Left cardiac atrium (tissue), 4 donors: ENCODE measurements at regions of chr4 and their contacts with region 1.

Region 1: GRCh38 chr4:169024762-169025161 is 14.7 kb upstream of the CBR4 start:
- DNase-seq: no peak
- ATAC-seq: peak; percentile 77 to 85

Region 2: GRCh38 chr4:169270810-169271691 is 246.3 kb after region 1 on chr4 and contains the start of gene SH3RF1:
- intact Hi-C with region 1: loop called in 1 of 2 experiments (anchors 10 kb)
- DNase-seq: peak; percentile 91
- ATAC-seq: peak; percentile 96
- total RNA-seq, gene SH3RF1: 8.7 to 12.8 TPM

Region 3: GRCh38 chr4:169485791-169486742 is 461.3 kb after region 1 on chr4:
- intact Hi-C with region 1: loop called (anchors 2 to 10 kb)
- DNase-seq: no peak
- ATAC-seq: peak in 1 of 2 donors; percentile 47